Heart right ventricle (tissue), 16 donors: ENCODE measurements at regions of chr6 and their contacts with region 1.

Region 1: GRCh38 chr6:166786704-166787293 is 159.7 kb upstream of the RPS6KA2 start:
- DNase-seq: peak in 1 of 2 donors; percentile 42
- ATAC-seq: peak in 3 of 8 donors; percentile 46 to 69 (median 61)
- H3K4me3 ChIP-seq: no peak overlapping the region
- H3K27ac ChIP-seq: no peak overlapping the region
- H3K4me1 ChIP-seq: no peaks in the 10 kb centered on the region
- H3K27me3 ChIP-seq: no peaks in the 10 kb centered on the region
- CTCF ChIP-seq: peak; percentile 61 to 86 (median 79)

Region 2: GRCh38 chr6:166728957-166729441 is 57.8 kb before region 1 on chr6:
- intact Hi-C with region 1: no loop called
- DNase-seq: no peak
- ATAC-seq: peak in 1 of 8 donors; percentile 15
- H3K4me3 ChIP-seq: no peak overlapping the region
- H3K27ac ChIP-seq: no peak overlapping the region
- H3K4me1 ChIP-seq: no peaks in the 10 kb centered on the region
- H3K27me3 ChIP-seq: peaks cover 0 to 5% (median 0%) of the 10 kb centered on the region in 7 donors
- CTCF ChIP-seq: no peak

Region 3: DNA sequence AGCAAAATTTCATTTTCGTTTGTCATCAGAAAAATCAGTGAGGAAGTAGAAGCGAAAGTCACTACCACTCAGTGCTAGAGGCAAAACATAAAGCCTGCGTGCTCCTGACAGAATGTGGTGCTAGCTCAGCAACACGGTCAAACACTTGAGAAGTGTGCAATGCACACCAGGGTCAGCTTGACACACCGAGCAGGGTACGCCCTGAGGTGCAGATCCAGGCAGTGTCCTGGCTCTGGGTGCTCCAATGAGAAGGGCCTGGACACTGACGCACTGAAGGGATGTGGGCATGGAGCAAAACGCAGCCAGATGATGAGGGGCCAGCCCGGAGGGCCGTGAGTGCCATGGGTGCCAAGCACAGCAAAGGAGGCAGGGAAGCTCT is 163.6 kb after region 1 on chr6:
- intact Hi-C with region 1: loop called in 6 of 10 experiments (anchors 1 to 10 kb)
- DNase-seq: no peak
- ATAC-seq: peak; percentile 4 to 61 (median 23)
- H3K4me3 ChIP-seq: peak overlapping the region in 4 of 10 donors; percentile 39 to 54 (median 48)
- H3K27ac ChIP-seq: peak overlapping the region in 9 of 10 donors; percentile 67 to 89 (median 78)
- H3K4me1 ChIP-seq: peaks cover 0 to 54% (median 6%) of the 10 kb centered on the region in 9 donors
- H3K27me3 ChIP-seq: no peaks in the 10 kb centered on the region
- CTCF ChIP-seq: no peak

Region 4: DNA sequence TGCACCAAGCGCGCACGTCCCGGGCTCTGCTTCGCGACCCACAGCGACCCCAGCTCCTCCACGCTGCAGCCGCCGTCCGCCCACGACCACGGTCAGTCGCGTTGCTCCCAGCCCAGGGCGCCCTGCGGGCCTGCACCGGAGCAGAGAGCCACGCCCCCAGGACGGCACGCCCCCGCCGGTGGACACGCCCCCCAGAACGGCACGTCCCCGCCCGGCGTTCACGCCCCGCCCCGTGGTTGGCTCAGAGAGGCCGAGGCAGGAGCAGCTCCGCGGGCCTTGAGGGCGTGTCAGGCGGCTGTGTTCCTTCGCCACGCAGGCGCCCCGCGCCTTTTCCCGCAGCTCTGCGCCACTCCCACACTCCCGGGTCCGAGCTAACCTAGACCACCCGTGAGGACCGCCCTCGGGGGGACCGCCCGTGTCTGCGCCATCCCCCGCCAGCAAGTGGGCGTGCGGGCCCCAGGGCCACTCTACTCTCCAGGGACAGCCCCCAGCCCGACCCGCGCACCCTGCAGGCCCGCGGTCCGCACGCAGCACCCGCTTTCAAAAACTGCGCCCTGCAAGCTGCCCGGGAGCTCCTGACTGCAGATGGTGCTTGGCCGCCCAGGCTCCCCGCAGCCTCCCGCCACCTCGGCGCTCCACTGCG is 169.8 kb after region 1 on chr6 and contains the start of gene RNASET2:
- intact Hi-C with region 1: loop called in 6 of 10 experiments (anchors 1 to 10 kb)
- DNase-seq: peak; percentile 97 to 99
- ATAC-seq: peak; percentile 98 to 99 (median 99)
- H3K4me3 ChIP-seq: peak within 1 kb of the TSS; percentile 63 to 95 (median 84)
- H3K27ac ChIP-seq: peak within 1 kb of the TSS; percentile 38 to 95 (median 78)
- H3K4me1 ChIP-seq: peaks cover 7 to 59% (median 20%) of the 10 kb centered on the region in 9 donors
- H3K27me3 ChIP-seq: no peaks in the 10 kb centered on the region
- CTCF ChIP-seq: no peak
- total RNA-seq, gene RNASET2: 7.1 to 44.3 (median 12.1) TPM

Region 5: DNA sequence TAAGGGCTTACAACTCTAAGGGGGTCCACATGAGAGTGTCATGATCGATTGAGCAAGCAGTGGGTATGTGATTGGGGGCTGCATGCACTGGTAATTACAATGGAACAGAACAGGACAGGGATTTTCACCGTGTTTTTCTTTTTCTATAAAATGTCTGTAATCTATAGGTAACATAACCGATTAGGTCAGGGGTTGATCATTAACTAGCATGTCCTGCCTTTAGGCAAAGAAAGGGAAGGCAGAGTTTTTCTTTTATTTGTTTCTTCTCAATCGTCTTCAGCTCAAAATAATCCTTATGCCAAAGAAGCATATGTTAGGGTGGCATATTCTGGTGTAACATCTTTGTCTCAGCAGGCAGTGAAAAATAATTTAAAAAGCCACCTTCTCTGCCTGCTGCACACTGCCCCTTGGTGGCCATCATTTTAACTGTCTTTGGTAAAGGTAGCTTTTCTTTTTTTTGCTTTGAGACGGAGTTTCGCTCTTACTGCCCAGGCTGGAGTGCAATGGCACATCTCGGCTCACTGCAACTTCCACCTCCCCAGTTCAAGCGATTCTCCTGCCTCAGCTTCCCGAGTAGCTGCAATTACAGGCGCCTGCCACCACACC is 202.7 kb after region 1 on chr6:
- intact Hi-C with region 1: loop called in 8 of 10 experiments (anchors 2 to 10 kb)
- DNase-seq: peak in 1 of 2 donors; percentile 35
- ATAC-seq: peak in 2 of 8 donors; percentile 29 to 39
- H3K4me3 ChIP-seq: no peak overlapping the region
- H3K27ac ChIP-seq: no peak overlapping the region
- H3K4me1 ChIP-seq: no peaks in the 10 kb centered on the region
- H3K27me3 ChIP-seq: no peaks in the 10 kb centered on the region
- CTCF ChIP-seq: peak in 8 of 9 donors; percentile 28 to 69 (median 50)

Region 6: GRCh38 chr6:167141667-167142432 is 355.1 kb after region 1 on chr6:
- intact Hi-C with region 1: loop called in 6 of 10 experiments (anchors 1 to 5 kb)
- DNase-seq: peak; percentile 18 to 56
- ATAC-seq: peak; percentile 71 to 91 (median 86)
- H3K4me3 ChIP-seq: no peak overlapping the region
- H3K27ac ChIP-seq: no peak overlapping the region
- H3K4me1 ChIP-seq: peaks cover 0 to 5% (median 0%) of the 10 kb centered on the region in 9 donors
- H3K27me3 ChIP-seq: peaks cover 0 to 69% (median 54%) of the 10 kb centered on the region in 7 donors
- CTCF ChIP-seq: peak; percentile 50 to 82 (median 76)

Region 7: DNA sequence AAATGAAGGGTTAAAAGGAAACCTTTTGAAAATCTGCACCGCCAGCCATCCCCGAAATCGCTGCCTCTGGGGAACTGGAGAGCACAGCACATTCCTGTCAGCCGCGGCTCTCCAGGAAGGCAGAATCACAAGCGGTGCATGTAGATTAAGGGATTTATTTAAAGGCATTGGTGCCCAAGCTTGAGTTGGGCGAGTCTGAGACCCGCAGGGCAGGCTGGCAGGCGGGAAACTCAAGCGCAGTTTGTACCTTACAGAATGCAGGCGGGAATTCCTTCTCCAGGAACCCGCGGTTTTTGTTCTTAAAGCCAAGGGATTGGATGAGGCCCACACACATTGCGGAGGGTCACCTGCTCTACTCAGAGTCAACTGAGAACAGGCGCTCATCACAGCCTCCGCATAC is 360.2 kb after region 1 on chr6:
- intact Hi-C with region 1: loop called in 6 of 10 experiments (anchors 1 to 5 kb)
- DNase-seq: no peak
- ATAC-seq: no peak
- H3K4me3 ChIP-seq: no peak overlapping the region
- H3K27ac ChIP-seq: no peak overlapping the region
- H3K4me1 ChIP-seq: peaks cover 0 to 7% (median 0%) of the 10 kb centered on the region in 9 donors
- H3K27me3 ChIP-seq: peaks cover 0 to 69% (median 36%) of the 10 kb centered on the region in 7 donors
- CTCF ChIP-seq: no peak